Endothelial cell of umbilical vein (primary cell): ENCODE measurements at regions of chr2 and their contacts with region 1.

Region 1: GRCh38 chr2:53970724-53971602 is at the start of gene PSME4:
- DNase-seq: peak; percentile 90
- H3K4me3 ChIP-seq: peak within 1 kb of the TSS; percentile 73 to 94 (median 93)
- H3K27ac ChIP-seq: peak within 1 kb of the TSS; percentile 86
- H3K4me1 ChIP-seq: peaks cover 17% of the 10 kb centered on the region
- H3K27me3 ChIP-seq: no peaks in the 10 kb centered on the region
- CTCF ChIP-seq: no peak
- POLR2A ChIP-seq: peak; percentile 91
- total RNA-seq, gene PSME4: 82.6 and 83.4 TPM in 2 replicates

Region 2: DNA sequence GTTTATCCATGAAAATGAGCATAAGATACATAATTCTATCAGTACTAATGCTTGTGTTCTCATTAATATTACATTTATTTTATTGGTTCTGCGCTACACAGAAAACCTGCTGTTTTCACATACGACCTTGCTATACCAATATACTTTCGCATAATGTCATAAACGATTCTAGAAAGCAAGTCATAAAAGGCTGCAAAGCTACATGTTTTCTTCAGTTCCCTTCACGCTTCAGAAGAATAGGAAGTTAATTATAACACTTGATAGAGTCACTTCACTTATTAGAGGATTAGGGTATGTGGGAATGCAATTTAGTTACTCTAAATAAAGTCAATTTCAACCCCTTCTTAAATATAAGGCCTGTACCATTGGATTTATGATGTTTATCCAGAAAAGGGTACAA is 29.2 kb before region 1 on chr2:
- CTCF ChIA-PET with region 1: interaction called, 4 read pairs
- POLR2A ChIA-PET with region 1: interaction called, 3 read pairs
- dilution Hi-C with region 1: no loop called
- intact Hi-C with region 1: loop called (anchors 2 kb)
- DNase-seq: no peak
- H3K4me3 ChIP-seq: no peak overlapping the region
- H3K27ac ChIP-seq: no peak overlapping the region
- H3K4me1 ChIP-seq: peaks cover 15% of the 10 kb centered on the region
- H3K27me3 ChIP-seq: no peaks in the 10 kb centered on the region
- CTCF ChIP-seq: no peak
- POLR2A ChIP-seq: no peak

Region 3: DNA sequence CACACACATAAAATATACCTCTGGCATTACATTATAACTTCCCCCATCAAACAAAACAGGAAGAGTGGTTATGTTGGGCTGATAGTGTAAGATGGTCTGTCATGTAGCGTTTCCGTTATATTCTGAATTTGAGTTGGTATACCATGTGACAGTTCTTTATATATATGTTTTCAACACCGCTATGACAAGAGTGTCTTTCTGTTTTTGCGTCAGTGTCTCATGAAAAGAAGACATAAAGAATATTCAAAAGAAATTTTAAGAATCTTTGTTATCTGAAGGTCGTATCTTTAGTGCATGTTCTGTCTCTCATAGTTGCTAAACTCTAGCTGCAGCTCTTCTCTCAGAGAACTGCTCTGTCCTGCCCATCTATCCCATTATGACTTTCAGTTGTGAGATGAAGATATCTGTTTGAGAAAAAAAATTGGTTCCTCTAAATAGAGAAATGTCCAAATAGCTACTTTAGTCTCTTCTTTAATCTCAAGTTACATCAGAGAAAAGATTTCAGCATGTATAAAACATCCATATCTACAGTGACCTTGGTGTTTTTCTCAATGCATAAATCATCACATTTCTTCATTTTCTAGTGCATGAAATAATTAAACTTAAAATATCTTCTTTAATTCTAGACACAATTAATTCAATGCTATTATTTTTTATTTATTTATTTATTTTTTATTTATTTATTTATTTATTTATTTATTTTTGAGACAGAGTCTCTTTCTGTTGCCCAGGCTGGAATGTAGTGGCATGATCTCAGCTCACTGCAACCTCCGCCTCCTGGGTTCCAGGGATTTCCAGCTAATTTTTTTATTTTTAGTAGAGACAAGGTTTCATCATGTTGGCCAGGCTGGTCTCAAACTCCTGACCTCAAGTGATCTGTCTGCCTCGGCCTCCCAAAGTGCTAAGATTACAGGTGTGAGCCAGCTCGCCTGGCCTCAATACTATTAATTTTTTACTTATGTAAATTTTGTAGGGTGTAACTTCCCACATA is 24.1 kb after region 1 on chr2:
- CTCF ChIA-PET with region 1: no interaction called
- POLR2A ChIA-PET with region 1: no interaction called
- dilution Hi-C with region 1: no loop called
- intact Hi-C with region 1: no loop called
- DNase-seq: no peak
- H3K4me3 ChIP-seq: no peak overlapping the region
- H3K27ac ChIP-seq: no peak overlapping the region
- H3K4me1 ChIP-seq: no peaks in the 10 kb centered on the region
- H3K27me3 ChIP-seq: no peaks in the 10 kb centered on the region
- CTCF ChIP-seq: no peak
- POLR2A ChIP-seq: no peak

Region 4: GRCh38 chr2:54723131-54723995 is 752.4 kb after region 1 on chr2 and contains the start of gene EML6:
- CTCF ChIA-PET with region 1: no interaction called
- POLR2A ChIA-PET with region 1: no interaction called
- dilution Hi-C with region 1: no loop called
- intact Hi-C with region 1: no loop called
- DNase-seq: peak; percentile 99
- H3K4me3 ChIP-seq: peak within 1 kb of the TSS; percentile 86 to 99 (median 96)
- H3K27ac ChIP-seq: peak within 1 kb of the TSS; percentile 78
- H3K4me1 ChIP-seq: peaks cover 22% of the 10 kb centered on the region
- H3K27me3 ChIP-seq: peaks cover 11 to 15% of the 10 kb centered on the region in 2 experiments
- CTCF ChIP-seq: peak; percentile 4 to 36
- POLR2A ChIP-seq: peak; percentile 88
- total RNA-seq, gene EML6: 1.3 and 2.1 TPM in 2 replicates